AG04449 (cell line): ENCODE measurements at regions of chr4 and their contacts with region 1.

Region 1: GRCh38 chr4:185134307-185134869 is 8.7 kb upstream of the SLC25A4 start:
- DNase-seq: no peak
- H3K4me3 ChIP-seq: no peak overlapping the region
- CTCF ChIP-seq: peak; percentile 34

Region 2: DNA sequence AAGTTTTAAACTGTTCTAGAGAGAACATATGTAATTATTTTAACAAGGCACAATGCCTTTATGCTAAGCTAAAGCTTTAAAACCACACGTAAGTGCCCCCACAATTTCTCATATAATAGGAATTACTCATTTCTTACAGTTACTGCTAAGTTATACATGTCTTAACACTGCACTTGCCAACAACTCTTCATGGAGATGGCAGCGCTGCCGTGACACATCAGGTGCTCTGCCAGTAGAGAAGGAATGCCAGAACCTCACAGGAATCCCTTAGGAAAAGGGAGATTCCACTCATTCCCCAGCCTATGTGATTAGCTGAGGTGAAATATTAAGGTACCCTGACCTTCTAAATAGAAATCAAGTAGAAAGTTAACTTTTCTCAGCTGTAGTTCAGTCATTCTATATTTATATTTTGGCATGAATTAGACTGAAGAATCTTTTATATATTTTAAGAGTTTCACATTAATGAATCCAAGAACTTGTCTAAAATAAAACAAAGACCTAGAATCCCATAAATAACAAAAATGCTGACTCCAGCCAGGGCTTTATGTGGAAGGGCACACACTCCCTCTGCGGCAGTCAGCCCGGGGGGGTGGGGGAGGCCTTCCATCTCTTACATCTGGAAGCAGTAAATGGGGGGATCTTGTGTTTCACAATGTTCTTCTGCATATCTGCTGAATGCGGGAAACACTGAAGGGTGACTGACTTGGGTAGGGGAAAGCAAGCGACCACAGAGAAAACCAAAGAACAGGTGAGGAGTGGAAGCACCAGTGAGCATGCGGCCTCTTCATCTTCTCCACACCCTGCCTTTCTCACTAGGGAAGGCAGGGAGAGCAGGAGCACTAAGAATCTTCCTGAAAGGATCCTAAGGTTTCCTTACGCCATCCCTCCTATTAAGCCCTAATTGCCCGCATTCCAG is 332.3 kb before region 1 on chr4:
- CTCF ChIA-PET with region 1: no interaction called
- POLR2A ChIA-PET with region 1: no interaction called
- DNase-seq: no peak
- H3K4me3 ChIP-seq: no peak overlapping the region
- CTCF ChIP-seq: no peak

Region 3: GRCh38 chr4:185005216-185005819 is 129.1 kb before region 1 on chr4:
- CTCF ChIA-PET with region 1: interaction called, 21 read pairs
- POLR2A ChIA-PET with region 1: no interaction called
- DNase-seq: no peak
- H3K4me3 ChIP-seq: no peak overlapping the region; the same call in 1 of the 2 replicates
- CTCF ChIP-seq: peak; percentile 93

Region 4: GRCh38 chr4:185039508-185040273 is 94.7 kb before region 1 on chr4:
- CTCF ChIA-PET with region 1: interaction called, 66 read pairs
- POLR2A ChIA-PET with region 1: no interaction called
- DNase-seq: peak; percentile 5
- H3K4me3 ChIP-seq: peak overlapping the region; percentile 36
- CTCF ChIP-seq: peak; percentile 58

Region 5: DNA sequence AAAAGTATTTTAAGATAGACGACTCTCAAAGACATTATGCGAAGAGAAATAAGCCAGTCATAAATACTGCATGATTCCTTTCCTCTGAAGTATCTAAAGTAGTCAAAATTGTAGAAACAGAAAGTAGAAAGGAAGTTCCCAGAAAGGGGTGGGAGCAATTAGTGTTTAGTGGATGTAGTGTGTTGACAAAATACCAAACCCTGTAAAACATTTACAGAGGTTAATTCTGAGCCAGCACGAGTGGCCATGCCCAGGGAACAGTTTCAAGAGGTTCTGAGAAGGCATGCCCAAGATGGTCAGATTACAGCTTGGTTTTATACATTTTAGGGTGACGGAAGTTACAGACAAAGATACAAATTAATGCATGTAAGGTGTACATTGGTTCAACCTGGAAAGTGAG is 25.7 kb before region 1 on chr4:
- CTCF ChIA-PET with region 1: interaction called, 11 read pairs
- POLR2A ChIA-PET with region 1: no interaction called
- DNase-seq: no peak
- H3K4me3 ChIP-seq: no peak overlapping the region
- CTCF ChIP-seq: no peak

Region 6: GRCh38 chr4:185115827-185116232 is 18.6 kb before region 1 on chr4:
- CTCF ChIA-PET with region 1: interaction called, 14 read pairs
- POLR2A ChIA-PET with region 1: no interaction called
- DNase-seq: peak; percentile 36
- H3K4me3 ChIP-seq: no peak overlapping the region
- CTCF ChIP-seq: no peak